Naive thymus-derived CD4-positive, alpha-beta T cell (primary cell): ENCODE measurements at regions of chr2 and their contacts with region 1.

Region 1: GRCh38 chr2:62705007-62705829 is at the start of gene EHBP1:
- DNase-seq: peak; percentile 95 to 99 (median 98)
- ATAC-seq: peak; percentile 98
- H3K4me3 ChIP-seq: peak within 1 kb of the TSS; percentile 82
- H3K4me3 Mint-ChIP-seq: peak within 1 kb of the TSS; percentile 83 to 98 (median 92)
- H3K27ac ChIP-seq: peak within 1 kb of the TSS; percentile 72
- H3K27ac Mint-ChIP-seq: peak within 1 kb of the TSS; percentile 76 to 93 (median 84)
- H3K4me1 ChIP-seq: peaks cover 0 to 25% of the 10 kb centered on the region in 2 donors
- H3K4me1 Mint-ChIP-seq: peaks cover 24 to 48% (median 31%) of the 10 kb centered on the region in 7 donors
- H3K27me3 ChIP-seq: no peaks in the 10 kb centered on the region
- H3K27me3 Mint-ChIP-seq: peaks cover 0 to 13% (median 0%) of the 10 kb centered on the region in 5 donors
- total RNA-seq, gene EHBP1: 23.8 to 31.5 (median 30.0) TPM

Region 2: GRCh38 chr2:60756191-60757041 is 1948.8 kb before region 1 on chr2 and contains the start of gene PAPOLG:
- CTCF ChIA-PET with region 1: no interaction called
- POLR2A ChIA-PET with region 1: no interaction called
- intact Hi-C with region 1: loop called (anchors 1 to 5 kb)
- DNase-seq: peak; percentile 90 to 97 (median 93)
- ATAC-seq: peak; percentile 100
- H3K4me3 ChIP-seq: peak within 1 kb of the TSS; percentile 86
- H3K4me3 Mint-ChIP-seq: peak within 1 kb of the TSS; percentile 94 to 100 (median 98)
- H3K27ac ChIP-seq: peak within 1 kb of the TSS; percentile 85
- H3K27ac Mint-ChIP-seq: peak within 1 kb of the TSS; percentile 94 to 100 (median 98)
- H3K4me1 ChIP-seq: peaks cover 0 to 13% of the 10 kb centered on the region in 2 donors
- H3K4me1 Mint-ChIP-seq: peaks cover 24 to 53% (median 46%) of the 10 kb centered on the region in 7 donors
- H3K27me3 ChIP-seq: no peaks in the 10 kb centered on the region
- H3K27me3 Mint-ChIP-seq: no peaks in the 10 kb centered on the region
- total RNA-seq, gene PAPOLG: 15.1 to 42.4 (median 22.9) TPM

Region 3: DNA sequence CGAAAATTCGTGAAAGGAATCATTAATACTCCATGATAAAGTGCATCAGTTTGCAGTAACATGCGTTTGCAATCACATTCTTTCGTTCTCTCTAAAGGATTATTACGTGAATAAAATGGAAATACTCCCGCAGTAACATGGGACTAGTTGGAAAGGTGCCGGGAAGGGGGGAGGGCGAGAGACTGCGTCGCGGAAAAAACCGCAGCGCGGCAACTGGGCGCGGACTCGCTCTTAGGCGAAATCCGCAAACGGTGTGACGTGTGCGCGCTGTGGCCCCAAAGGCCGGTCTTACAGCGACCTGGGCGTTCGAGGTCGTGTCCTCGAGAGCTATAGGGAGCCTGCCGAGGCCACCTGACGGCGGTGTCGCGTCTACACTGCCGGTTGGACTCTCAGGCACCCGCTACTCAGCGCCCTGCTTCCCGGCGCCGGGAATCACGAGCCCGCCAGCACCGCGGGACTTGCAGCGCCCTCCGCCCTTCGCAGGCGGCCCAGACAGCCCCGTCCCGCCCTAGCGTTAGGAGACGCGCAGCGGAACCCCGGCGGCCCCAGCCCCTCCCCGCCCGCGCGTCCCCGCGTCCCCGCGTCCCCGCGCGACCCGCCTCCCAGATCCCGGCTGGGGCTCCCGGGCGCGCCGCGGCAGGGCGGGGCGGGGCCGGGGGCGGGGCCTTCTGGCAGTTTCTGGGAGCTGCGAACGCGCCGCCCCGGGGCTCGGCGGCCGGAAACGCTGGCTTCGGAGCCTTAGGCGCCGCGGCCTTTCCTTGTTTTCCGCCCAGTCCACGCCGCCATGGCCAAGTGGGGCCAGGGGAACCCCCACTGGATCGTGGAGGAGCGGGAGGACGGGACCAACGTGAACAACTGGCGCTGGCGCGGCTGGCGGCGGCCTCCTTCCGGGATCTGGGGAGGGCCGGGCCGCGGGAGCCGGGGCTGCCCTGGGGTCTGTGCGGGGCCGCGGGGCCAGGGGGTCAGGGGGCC is 1528.2 kb before region 1 on chr2:
- CTCF ChIA-PET with region 1: no interaction called
- POLR2A ChIA-PET with region 1: no interaction called
- intact Hi-C with region 1: loop called (anchors 2 to 10 kb)
- DNase-seq: peak; percentile 89 to 97 (median 93)
- ATAC-seq: peak; percentile 95
- H3K4me3 ChIP-seq: peak overlapping the region; percentile 82
- H3K4me3 Mint-ChIP-seq: peak overlapping the region; percentile 90 to 100 (median 94)
- H3K27ac ChIP-seq: peak overlapping the region; percentile 97
- H3K27ac Mint-ChIP-seq: peak overlapping the region; percentile 89 to 97 (median 95)
- H3K4me1 ChIP-seq: peaks cover 27 to 41% of the 10 kb centered on the region in 2 donors
- H3K4me1 Mint-ChIP-seq: peaks cover 38 to 53% (median 48%) of the 10 kb centered on the region in 7 donors
- H3K27me3 ChIP-seq: no peaks in the 10 kb centered on the region
- H3K27me3 Mint-ChIP-seq: peaks cover 0 to 8% (median 0%) of the 10 kb centered on the region in 5 donors

Region 4: DNA sequence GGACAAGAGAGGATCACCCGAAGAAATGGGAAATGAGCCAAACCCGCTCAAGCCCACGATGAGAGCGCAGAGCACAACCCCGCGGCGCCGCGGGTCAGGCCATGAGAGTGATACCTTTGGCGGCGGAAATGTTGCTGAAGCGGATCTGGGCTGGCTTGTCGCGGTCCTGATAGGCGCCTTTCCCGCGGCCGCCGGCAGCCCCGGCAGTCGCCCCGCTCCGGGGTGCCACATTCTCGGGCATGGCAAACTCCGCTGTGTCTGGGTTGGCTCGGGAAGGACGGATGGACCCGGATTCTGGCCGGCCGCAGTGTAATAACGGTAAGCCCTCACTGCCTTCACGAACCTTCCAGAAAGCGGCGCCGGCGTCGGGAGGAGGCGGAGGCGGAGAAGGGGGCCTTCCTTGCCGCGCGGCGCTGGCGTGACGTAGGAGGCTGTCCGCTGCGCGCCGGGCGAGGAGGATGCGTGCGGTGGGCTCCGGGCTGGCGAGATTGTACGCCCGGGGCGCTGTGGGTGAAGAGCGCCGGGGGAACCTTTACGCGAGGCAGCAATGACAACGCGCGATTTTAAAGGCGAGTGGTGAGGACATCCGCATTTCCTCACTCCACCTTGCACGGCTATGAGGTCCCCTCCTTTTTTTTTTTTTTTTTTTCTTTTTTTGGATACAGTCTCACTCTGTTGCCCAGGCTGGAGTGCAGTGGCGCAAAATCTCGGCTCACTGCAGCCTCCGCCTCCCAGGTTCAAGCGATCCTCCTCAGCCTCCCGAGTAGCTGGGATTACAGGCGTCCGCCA is 816.8 kb before region 1 on chr2 and contains the start of gene CCT4:
- CTCF ChIA-PET with region 1: no interaction called
- POLR2A ChIA-PET with region 1: no interaction called
- intact Hi-C with region 1: loop called (anchors 1 kb)
- DNase-seq: peak; percentile 86 to 99 (median 95)
- ATAC-seq: peak; percentile 94
- H3K4me3 ChIP-seq: peak within 1 kb of the TSS; percentile 92
- H3K4me3 Mint-ChIP-seq: peak within 1 kb of the TSS; percentile 85 to 100 (median 99)
- H3K27ac ChIP-seq: peak within 1 kb of the TSS; percentile 98
- H3K27ac Mint-ChIP-seq: peak within 1 kb of the TSS; percentile 98 to 100 (median 100)
- H3K4me1 ChIP-seq: peaks cover 15 to 17% of the 10 kb centered on the region in 2 donors
- H3K4me1 Mint-ChIP-seq: peaks cover 11 to 34% (median 29%) of the 10 kb centered on the region in 7 donors
- H3K27me3 ChIP-seq: no peaks in the 10 kb centered on the region
- H3K27me3 Mint-ChIP-seq: no peaks in the 10 kb centered on the region
- total RNA-seq, gene CCT4: 84.2 to 177 (median 90.3) TPM

Region 5: DNA sequence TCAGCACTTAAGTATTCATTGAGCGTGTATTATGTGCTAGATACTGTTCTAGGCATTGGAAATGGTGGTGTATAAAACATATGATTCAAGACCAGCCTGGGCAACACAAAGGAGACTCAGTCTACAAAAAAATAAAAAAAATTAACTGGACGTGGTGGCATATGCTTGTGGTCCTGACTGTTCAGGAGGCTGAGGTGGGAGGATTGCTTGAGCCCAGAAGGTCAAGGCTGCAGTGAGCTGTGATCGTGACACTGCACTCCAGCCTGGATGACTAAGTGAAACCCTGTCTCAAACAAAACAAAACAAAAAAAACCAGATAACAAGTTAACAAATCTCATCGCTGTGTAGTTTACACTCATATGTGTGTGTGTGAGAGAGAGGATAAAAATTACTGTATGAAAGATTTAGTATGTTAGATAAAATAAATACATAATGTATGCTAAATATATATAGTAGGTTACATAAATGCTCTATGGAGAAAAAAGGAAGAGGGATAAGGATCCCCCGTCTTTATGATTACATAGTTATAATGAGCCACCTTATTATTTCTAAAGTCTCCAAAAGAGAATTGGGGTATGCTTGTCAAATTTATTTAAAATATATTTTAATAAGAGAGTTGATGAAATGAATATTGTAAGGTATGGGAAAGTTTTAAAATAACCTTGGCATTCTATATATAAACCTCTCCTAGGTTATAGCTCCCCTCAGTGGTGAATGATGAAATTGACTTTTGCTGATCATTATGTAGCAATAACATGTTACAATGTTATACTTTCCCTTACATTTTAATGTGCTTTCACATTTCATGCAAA is 69.5 kb after region 1 on chr2:
- CTCF ChIA-PET with region 1: no interaction called
- POLR2A ChIA-PET with region 1: no interaction called
- intact Hi-C with region 1: loop called in 1 of 2 experiments (anchors 2 kb)
- DNase-seq: peak in 5 of 9 donors; percentile 16 to 43 (median 33)
- ATAC-seq: peak; percentile 73
- H3K4me3 ChIP-seq: no peak overlapping the region
- H3K4me3 Mint-ChIP-seq: no peak overlapping the region
- H3K27ac ChIP-seq: no peak overlapping the region
- H3K27ac Mint-ChIP-seq: no peak overlapping the region
- H3K4me1 ChIP-seq: no peaks in the 10 kb centered on the region
- H3K4me1 Mint-ChIP-seq: peaks cover 0 to 10% (median 8%) of the 10 kb centered on the region in 7 donors
- H3K27me3 ChIP-seq: no peaks in the 10 kb centered on the region
- H3K27me3 Mint-ChIP-seq: no peaks in the 10 kb centered on the region

Region 6: DNA sequence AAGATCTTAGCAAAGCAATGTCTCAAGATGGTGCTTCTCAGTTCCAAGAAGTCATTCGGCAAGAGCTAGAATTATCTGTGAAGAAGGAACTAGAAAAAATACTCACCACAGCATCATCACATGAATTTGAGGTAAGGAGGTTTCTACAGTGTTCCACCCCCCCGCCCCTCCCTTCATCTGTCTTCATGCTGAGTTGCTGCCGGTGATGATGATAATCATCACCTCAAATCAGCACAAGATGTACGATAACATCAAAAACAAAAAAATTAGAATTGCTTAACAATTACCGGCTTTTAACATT is 1151.0 kb after region 1 on chr2:
- CTCF ChIA-PET with region 1: no interaction called
- POLR2A ChIA-PET with region 1: no interaction called
- intact Hi-C with region 1: loop called in 1 of 2 experiments (anchors 5 kb)
- DNase-seq: peak in 7 of 9 donors; percentile 54 to 87 (median 78)
- ATAC-seq: peak; percentile 93
- H3K4me3 ChIP-seq: peak overlapping the region; percentile 28
- H3K4me3 Mint-ChIP-seq: peak overlapping the region; percentile 42 to 78 (median 73)
- H3K27ac ChIP-seq: peak overlapping the region; percentile 81
- H3K27ac Mint-ChIP-seq: peak overlapping the region; percentile 85 to 97 (median 93)
- H3K4me1 ChIP-seq: peaks cover 27 to 36% of the 10 kb centered on the region in 2 donors
- H3K4me1 Mint-ChIP-seq: peaks cover 40 to 73% (median 71%) of the 10 kb centered on the region in 7 donors
- H3K27me3 ChIP-seq: no peaks in the 10 kb centered on the region
- H3K27me3 Mint-ChIP-seq: no peaks in the 10 kb centered on the region